Psoas muscle (tissue), 8 donors: ENCODE measurements at regions of chr9 and their contacts with region 1.

Region 1: GRCh38 chr9:7408845-7409244 is 390.7 kb downstream of the DMAC1 start:
- DNase-seq: no peak
- ATAC-seq: no peak
- H3K4me3 ChIP-seq: no peak overlapping the region
- H3K27ac ChIP-seq: no peak overlapping the region
- H3K4me1 ChIP-seq: no peaks in the 10 kb centered on the region
- H3K27me3 ChIP-seq: no peaks in the 10 kb centered on the region
- CTCF ChIP-seq: no peak

Region 2: DNA sequence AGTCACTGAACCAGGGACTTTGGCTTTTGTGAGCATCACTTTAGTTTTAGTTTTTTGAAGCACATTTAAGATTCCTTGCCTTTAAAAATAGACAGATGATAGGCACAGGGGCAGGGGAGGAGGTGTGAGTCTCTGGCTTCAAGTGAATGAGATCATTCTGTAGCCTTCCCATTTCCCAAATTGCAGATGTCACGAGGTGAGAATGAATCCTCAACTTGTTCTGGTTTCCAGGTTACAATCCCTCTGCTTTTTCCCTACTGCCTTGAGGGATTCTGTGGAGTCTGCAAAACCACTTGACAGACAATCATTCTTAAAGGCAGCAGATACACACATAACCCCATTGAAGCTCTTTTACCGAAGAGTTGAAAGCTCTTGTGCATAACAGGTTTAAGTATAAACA is 58.3 kb after region 1 on chr9:
- intact Hi-C with region 1: loop called in 1 of 2 experiments (anchors 2 kb)
- DNase-seq: no peak
- ATAC-seq: no peak
- H3K4me3 ChIP-seq: no peak overlapping the region
- H3K27ac ChIP-seq: no peak overlapping the region
- H3K4me1 ChIP-seq: no peaks in the 10 kb centered on the region
- H3K27me3 ChIP-seq: no peaks in the 10 kb centered on the region
- CTCF ChIP-seq: no peak